Activated CD4-positive, alpha-beta T cell treated with anti-CD3 and anti-CD28 coated beads for 36 hours (primary cell): ENCODE measurements at regions of chr14 and their contacts with region 1.

Region 1: DNA sequence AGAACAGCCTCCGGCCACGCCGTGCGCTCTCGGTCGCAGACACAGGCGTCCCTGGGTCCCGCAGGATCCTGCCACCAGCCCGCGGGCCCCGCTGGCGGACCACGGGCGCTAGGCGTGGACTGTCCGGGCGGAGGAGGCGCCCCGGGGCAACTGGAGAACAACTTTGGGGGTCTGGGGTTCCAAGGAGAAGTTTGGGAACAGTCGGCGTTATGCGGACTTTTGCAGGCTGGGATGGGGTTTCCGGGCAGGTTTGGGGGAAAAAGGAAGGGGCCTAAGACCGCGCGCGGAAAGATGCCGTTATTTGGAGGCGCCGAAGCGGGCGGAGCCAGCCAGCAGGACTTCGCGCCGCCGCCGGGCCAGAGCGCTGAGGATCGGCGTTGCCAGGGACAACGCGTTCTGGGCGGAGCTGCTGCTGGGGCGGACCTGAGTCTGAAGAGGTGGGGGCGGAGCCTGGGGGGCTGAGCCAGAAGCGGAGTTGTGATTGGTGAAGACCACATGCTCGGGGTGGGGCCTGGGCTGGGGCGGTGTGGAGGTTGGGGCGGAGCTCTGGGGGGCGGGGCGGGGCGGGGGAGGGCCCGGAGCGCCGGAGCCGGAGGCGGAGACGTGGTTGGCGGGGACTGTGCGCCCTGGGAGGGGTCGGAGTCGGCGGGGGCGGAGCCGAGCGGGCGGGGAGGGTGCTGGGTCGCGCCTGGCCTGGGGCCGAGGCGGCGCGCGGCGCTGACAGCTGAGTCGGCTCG is at the start of gene CYP46A1:
- DNase-seq: peak; percentile 100
- ATAC-seq: peak; percentile 97
- H3K4me3 Mint-ChIP-seq: peak within 1 kb of the TSS; percentile 86
- H3K27ac Mint-ChIP-seq: peak within 1 kb of the TSS; percentile 73
- H3K4me1 Mint-ChIP-seq: peaks cover 10% of the 10 kb centered on the region
- H3K27me3 Mint-ChIP-seq: peaks cover 9% of the 10 kb centered on the region
- total RNA-seq, gene CYP46A1: 0.05 to 0.23 TPM

Region 2: DNA sequence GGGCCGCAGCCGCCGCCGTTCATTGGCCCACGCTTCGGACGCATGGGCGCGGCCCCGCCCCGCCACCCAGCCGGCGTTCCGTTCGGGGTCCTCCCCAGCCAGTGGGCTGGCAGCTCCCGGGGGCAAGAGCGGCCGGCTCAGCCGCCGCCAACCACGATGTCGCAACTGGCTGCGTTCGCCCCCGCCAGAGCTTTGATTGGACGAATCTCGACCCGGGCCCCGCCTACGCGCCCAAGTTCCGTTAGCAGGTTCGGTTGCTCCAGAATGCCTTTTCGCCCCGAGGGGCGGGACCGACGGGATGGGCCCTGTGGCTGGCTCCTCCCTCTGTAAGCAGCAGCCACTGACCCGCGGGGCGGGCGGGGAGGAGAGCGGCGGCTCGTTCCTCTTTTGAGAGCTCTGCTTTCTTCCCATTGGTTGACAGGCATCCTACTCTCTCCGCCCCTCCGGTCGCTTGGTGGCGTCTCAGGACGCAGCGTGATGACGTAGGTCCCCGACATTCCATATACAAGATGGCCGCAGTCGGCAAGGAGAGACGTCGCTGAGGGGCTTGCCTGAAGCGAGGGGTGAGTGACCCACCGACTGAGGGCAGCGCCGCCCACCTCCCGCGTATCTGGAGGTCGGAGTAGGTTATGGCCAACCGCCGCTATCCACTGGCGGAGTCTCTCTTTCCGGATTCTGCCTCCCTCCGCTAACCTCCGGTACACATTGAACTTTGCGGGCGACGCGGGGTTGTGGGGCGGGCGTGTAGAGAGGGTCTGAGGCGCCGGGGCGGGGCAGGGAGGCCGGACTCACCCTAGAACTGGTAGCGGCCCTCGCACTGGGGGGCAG is 202.7 kb before region 1 on chr14 and contains the start of gene CCNK:
- CTCF ChIA-PET with region 1: interaction called, 3 read pairs
- POLR2A ChIA-PET with region 1: interaction called, 4 read pairs
- intact Hi-C with region 1: loop called (anchors 1 kb)
- DNase-seq: peak; percentile 100
- ATAC-seq: peak; percentile 95
- H3K4me3 Mint-ChIP-seq: peak within 1 kb of the TSS; percentile 97
- H3K27ac Mint-ChIP-seq: peak within 1 kb of the TSS; percentile 96
- H3K4me1 Mint-ChIP-seq: peaks cover 58% of the 10 kb centered on the region
- H3K27me3 Mint-ChIP-seq: no peaks in the 10 kb centered on the region
- total RNA-seq, gene CCNK: 93.7 to 96.2 TPM

Region 3: GRCh38 chr14:99590712-99591555 is 92.9 kb before region 1 on chr14:
- CTCF ChIA-PET with region 1: no interaction called
- POLR2A ChIA-PET with region 1: no interaction called
- intact Hi-C with region 1: no loop called
- DNase-seq: no peak
- ATAC-seq: no peak
- H3K4me3 Mint-ChIP-seq: no peak overlapping the region
- H3K27ac Mint-ChIP-seq: no peak overlapping the region
- H3K4me1 Mint-ChIP-seq: peaks cover 9% of the 10 kb centered on the region
- H3K27me3 Mint-ChIP-seq: no peaks in the 10 kb centered on the region

Region 4: GRCh38 chr14:99604283-99604765 is 79.5 kb before region 1 on chr14:
- CTCF ChIA-PET with region 1: no interaction called
- POLR2A ChIA-PET with region 1: no interaction called
- intact Hi-C with region 1: loop called (anchors 1 kb)
- DNase-seq: peak; percentile 96
- ATAC-seq: peak; percentile 94
- H3K4me3 Mint-ChIP-seq: peak overlapping the region; percentile 72
- H3K27ac Mint-ChIP-seq: peak overlapping the region; percentile 72
- H3K4me1 Mint-ChIP-seq: peaks cover 28% of the 10 kb centered on the region
- H3K27me3 Mint-ChIP-seq: peaks cover 2% of the 10 kb centered on the region

Region 5: DNA sequence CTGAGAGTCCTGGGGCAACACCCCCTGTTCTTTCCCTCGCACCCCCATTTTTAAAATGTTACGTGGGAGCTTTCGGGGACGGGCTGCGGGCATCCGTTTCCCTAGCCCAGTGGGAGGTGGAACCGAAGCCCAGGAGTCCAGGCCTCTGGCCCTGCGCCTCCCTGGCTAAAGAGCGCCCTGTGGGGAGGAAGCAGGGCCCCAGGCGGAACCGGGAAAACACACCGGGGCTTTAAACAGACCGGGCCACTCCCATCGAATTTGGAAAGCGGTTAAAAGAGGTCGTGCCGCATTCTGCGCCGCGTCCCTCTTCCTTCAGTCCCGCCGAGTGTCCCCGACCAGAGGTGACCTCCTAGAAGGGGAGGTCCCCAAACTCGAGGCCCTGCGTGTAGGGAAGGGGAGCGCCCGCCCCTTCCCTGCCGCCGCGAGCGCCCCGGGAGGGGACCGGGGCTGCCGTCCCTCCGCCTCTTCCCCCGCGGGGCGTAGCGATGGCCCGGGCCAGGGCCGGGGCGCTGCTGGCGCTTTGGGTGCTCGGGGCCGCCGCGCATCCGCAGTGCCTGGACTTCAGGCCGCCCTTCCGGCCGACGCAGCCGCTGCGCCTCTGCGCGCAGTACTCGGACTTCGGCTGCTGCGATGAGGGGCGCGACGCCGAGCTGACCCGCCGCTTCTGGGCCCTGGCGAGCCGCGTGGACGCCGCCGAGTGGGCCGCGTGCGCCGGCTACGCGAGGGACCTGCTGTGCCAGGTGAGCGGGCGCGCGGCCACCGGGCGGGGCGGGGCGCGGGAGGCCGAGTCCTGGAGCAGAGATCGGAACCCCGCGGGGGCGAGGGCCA is 38.9 kb before region 1 on chr14 and contains the start of gene HHIPL1:
- CTCF ChIA-PET with region 1: no interaction called
- POLR2A ChIA-PET with region 1: no interaction called
- intact Hi-C with region 1: no loop called
- DNase-seq: no peak
- ATAC-seq: no peak
- H3K4me3 Mint-ChIP-seq: no peak within 1 kb of the TSS
- H3K27ac Mint-ChIP-seq: no peak within 1 kb of the TSS
- H3K4me1 Mint-ChIP-seq: no peaks in the 10 kb centered on the region
- H3K27me3 Mint-ChIP-seq: peaks cover 17% of the 10 kb centered on the region
- total RNA-seq, gene HHIPL1: 0.07 TPM in 1 of 2 experiments, not detected in the other

Region 6: GRCh38 chr14:99884834-99885648 is 201.3 kb after region 1 on chr14:
- CTCF ChIA-PET with region 1: interaction called, 6 read pairs
- POLR2A ChIA-PET with region 1: no interaction called
- intact Hi-C with region 1: loop called (anchors 1 kb)
- DNase-seq: no peak
- ATAC-seq: peak; percentile 73
- H3K4me3 Mint-ChIP-seq: no peak overlapping the region
- H3K27ac Mint-ChIP-seq: no peak overlapping the region
- H3K4me1 Mint-ChIP-seq: no peaks in the 10 kb centered on the region
- H3K27me3 Mint-ChIP-seq: peaks cover 6% of the 10 kb centered on the region

Region 7: DNA sequence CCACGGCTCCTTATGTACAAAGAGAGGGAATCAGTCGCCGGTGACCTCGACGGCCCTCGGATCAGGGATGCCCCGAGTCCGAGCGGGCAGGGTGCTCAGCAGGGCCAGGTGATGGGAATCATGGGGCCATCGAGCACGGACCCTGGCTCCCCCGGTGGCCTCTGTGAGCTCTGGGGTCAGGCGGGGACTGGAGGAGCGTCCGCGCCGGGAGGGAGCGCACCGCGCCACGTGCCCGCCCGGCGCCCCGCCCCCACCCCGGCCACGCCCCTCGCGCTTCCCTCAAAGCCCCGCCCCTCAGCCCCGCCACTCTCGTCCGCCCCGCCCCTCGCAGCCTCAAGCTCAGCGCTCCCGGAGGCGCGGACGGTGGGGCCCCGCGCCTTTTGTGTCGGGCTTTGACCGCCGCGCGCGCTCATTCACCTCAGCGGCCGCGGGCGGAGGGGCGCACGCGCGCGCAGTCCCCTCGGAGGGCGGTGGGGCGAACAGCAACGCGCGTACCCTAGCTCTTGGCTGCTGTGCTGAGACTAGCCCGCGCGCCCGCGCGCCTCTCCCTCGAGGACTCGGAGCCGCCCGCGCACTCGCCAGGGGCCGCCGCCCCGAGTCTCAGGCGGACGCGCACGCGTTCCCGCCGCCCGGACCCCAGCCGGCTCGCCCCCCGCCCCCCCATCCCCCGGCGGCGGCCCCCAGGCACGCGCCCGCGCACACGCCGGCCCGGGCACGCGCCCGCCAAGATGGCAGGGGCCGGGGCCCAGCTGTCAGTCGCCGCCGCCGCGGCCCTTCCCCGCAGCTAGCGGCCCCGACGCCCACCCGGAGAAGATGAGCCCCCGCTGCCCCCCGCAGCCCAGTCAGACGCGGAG is 287.5 kb after region 1 on chr14:
- CTCF ChIA-PET with region 1: interaction called, 3 read pairs
- POLR2A ChIA-PET with region 1: interaction called, 3 read pairs
- intact Hi-C with region 1: loop called in 1 of 2 experiments (anchors 1 kb)
- DNase-seq: peak; percentile 93
- ATAC-seq: peak; percentile 87
- H3K4me3 Mint-ChIP-seq: peak overlapping the region; percentile 98
- H3K27ac Mint-ChIP-seq: no peak overlapping the region
- H3K4me1 Mint-ChIP-seq: peaks cover 21% of the 10 kb centered on the region
- H3K27me3 Mint-ChIP-seq: peaks cover 21% of the 10 kb centered on the region